Mucosa of descending colon (tissue), 3 donors: ENCODE measurements at regions of chr4 and their contacts with region 1.

Region 1: GRCh38 chr4:156968479-156968984 is 3.1 kb downstream of the PDGFC start:
- DNase-seq: peak in 2 of 3 donors; percentile 39 to 85
- ATAC-seq: peak; percentile 70
- H3K4me3 ChIP-seq: no peak overlapping the region
- H3K4me1 ChIP-seq: peaks cover 4% of the 10 kb centered on the region
- CTCF ChIP-seq: peak; percentile 76

Region 2: DNA sequence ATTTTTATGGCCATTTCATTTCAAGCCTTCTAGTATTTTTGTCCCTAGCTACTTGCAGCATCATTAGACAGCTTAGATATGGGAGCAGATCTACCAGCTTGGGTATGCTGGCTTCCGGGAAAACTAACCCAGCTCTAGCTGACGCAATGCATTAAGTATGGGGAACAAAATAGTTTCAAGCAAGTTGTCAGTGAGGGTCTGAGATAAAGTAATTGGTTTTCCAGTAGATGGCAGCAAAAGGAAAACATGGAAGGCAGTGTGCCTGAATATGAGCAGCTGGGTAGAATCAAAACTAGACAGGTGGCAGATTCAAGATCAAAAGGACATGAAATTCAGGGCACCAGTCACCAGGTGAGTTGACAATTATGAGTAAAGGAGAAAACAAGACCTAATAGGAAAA is 674.0 kb before region 1 on chr4:
- intact Hi-C with region 1: loop called in 1 of 2 experiments (anchors 10 kb)
- DNase-seq: peak in 1 of 3 donors; percentile 3
- ATAC-seq: peak; percentile 62
- H3K4me3 ChIP-seq: no peak overlapping the region
- H3K4me1 ChIP-seq: no peaks in the 10 kb centered on the region
- CTCF ChIP-seq: no peak

Region 3: DNA sequence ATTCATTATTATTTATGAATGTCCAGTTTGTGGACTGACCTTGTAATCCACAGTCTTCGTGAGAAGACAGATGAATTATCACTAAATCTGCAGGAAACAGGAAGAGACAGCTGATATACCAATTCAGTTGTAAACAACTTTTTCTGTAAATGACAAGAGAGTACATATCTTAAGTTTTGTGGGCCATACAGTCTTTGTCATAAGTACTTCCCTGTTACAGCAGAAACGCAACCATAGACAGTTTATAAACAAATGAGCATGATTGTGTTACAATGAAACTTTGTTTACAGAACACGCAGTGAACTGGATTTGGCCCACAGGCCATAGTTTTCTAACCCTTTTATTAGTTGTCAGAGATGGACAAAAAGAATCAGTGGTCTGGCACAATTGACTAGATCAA is 440.3 kb before region 1 on chr4:
- intact Hi-C with region 1: no loop called
- DNase-seq: no peak
- ATAC-seq: no peak
- H3K4me3 ChIP-seq: no peak overlapping the region
- H3K4me1 ChIP-seq: no peaks in the 10 kb centered on the region
- CTCF ChIP-seq: no peak

Region 4: GRCh38 chr4:156638925-156639605 is 329.5 kb before region 1 on chr4:
- intact Hi-C with region 1: no loop called
- DNase-seq: no peak
- ATAC-seq: no peak
- H3K4me3 ChIP-seq: no peak overlapping the region
- H3K4me1 ChIP-seq: no peaks in the 10 kb centered on the region
- CTCF ChIP-seq: no peak